Activated T-helper 1 cell treated with anti-CD3 and anti-CD28 coated beads, Interleukin-12 subunit alpha, Interleukin-12 subunit beta, Interleukin-2, Interleukin-4 antibody, amounts not matched to agents 30 ng/mL and 10 ng/mL and 1 ng/mL, durations not matched to agents 14 hours and 24 hours and 36 hours (primary cell): ENCODE measurements at regions of chr1 and their contacts with region 1.

Region 1: DNA sequence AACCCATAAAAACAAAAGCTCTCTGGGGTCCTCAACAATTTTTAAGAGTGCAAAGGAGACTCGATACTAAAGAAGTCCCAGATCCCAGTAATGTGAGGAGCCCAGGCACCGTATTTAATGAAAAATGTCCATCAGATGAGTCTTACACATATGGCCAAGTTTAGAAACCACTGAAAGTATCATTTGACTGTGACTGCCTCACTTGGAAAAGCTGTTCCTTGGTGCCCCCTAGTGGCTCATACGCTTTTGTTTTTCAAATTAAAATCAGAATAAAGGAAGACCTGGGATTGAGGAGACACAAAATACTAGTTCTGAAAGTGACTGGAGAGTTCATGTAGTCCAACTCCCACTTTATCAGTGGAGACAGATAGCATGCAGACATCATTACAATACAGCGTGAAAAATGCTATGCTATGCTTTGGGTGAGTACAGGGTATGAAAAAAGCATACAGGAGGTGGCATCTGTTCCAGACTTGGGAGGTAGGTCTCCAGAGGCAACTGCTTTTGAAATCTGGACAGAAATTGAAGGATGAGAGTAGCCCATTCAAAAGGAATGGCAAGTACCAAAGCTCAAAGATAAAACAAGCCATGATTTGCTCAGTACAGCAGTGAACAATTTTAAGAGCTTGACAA is 33.8 kb downstream of the GDAP2 start:
- DNase-seq: peak; percentile 32
- H3K4me3 Mint-ChIP-seq: no peak overlapping the region
- H3K27ac Mint-ChIP-seq: no peak overlapping the region
- H3K4me1 Mint-ChIP-seq: peaks cover 7% of the 10 kb centered on the region
- H3K27me3 Mint-ChIP-seq: no peaks in the 10 kb centered on the region

Region 2: DNA sequence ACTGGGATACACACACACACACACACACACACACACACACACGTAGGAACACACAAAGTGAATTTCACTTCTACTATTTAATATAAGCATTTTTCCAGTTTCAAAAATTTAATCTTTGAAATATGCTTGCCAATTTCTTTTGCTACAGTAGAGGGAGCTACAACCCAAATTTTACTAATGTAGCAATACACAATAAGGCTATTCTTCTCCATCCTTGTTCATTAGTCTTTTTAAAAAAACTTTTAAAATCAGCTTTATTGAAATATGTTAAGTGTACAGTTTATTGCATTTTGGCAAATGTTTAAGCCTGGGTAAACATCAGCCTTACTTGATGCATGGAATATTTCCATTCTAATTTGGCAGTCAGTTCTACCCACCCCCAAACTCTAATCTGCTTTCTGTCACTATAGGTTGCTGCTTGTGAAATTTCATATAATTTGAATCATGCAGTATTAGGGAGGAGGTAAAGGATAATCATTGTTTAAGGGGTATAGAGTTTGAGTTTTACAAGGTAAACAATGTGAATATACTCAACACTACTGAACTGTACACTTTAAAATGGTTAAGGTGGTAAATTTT is 382.8 kb before region 1 on chr1:
- intact Hi-C with region 1: loop called (anchors 1 kb)
- DNase-seq: no peak
- H3K4me3 Mint-ChIP-seq: no peak overlapping the region
- H3K27ac Mint-ChIP-seq: no peak overlapping the region
- H3K4me1 Mint-ChIP-seq: peaks cover 6% of the 10 kb centered on the region
- H3K27me3 Mint-ChIP-seq: no peaks in the 10 kb centered on the region

Region 3: GRCh38 chr1:117929173-117929989 is 33.8 kb after region 1 on chr1 and contains the starts of genes GDAP2 and WDR3:
- intact Hi-C with region 1: loop called (anchors 1 kb)
- DNase-seq: peak; percentile 96
- H3K4me3 Mint-ChIP-seq: peak within 1 kb of the TSS; percentile 96
- H3K27ac Mint-ChIP-seq: peak within 1 kb of the TSS; percentile 89
- H3K4me1 Mint-ChIP-seq: peaks cover 46% of the 10 kb centered on the region
- H3K27me3 Mint-ChIP-seq: no peaks in the 10 kb centered on the region
- total RNA-seq, gene GDAP2: 21.4 and 29.0 TPM in 2 replicates
- total RNA-seq, gene WDR3: 68.3 and 72.8 TPM in 2 replicates